ENCODE measurements at regions of chr2 and their contacts with region 1.

Region 1: DNA sequence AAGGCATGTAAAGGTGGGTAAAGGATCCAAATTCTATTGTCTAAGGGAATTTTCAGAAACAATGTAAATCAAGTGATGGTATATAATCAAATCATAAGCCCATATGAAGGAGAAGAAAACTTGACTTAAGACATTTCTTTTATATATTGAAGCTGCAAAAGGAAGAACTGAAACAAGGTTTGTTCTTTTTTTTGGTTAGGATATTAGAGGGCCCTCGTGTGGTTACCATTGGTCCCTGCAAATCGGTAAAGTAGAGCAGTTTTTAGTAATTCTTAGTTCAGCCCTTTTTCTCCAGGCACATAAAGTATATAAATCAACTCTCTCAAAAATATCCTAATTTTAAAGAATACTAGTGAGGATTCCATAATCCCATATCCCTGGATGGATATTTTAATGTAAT is 105.6 kb upstream of the STK17B start:
- DNase-seq: peak; percentile 50
- ATAC-seq: peak; percentile 20
- H3K4me3 Mint-ChIP-seq: no peak overlapping the region
- H3K27ac Mint-ChIP-seq: peak overlapping the region; percentile 11
- H3K4me1 Mint-ChIP-seq: peaks cover 61% of the 10 kb centered on the region
- H3K27me3 Mint-ChIP-seq: no peaks in the 10 kb centered on the region

Region 2: DNA sequence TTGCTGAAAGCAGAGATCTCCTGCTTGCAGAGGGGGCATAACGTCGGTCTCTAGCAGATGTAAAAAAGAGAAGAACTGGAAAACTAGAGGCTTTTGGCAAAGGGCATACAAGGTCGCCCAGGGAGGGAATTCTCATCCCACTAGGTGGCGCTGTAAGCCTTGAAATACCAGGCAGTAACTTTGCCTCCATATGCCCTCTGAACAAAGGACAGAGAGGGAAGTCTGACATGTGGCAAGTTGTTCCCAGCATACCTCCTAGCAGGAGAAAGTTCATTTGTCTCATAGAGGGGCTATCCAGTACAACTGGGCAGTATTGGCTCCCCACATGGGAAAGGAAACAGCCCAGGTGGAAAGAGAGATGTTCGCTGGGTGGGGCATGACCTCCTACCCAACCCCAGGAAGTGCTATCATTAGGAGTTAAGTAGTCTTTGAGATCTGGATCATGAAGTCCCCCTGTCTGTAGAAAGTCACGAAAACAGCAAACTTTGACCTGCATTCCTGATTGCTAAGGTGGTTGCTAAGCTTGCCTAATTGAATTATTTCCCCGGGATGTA is 145.5 kb before region 1 on chr2:
- CTCF ChIA-PET with region 1: interaction called, 10 read pairs
- POLR2A ChIA-PET with region 1: no interaction called
- intact Hi-C with region 1: loop called in 1 of 2 experiments (anchors 1 kb)
- DNase-seq: peak; percentile 83
- ATAC-seq: peak; percentile 62
- H3K4me3 Mint-ChIP-seq: no peak overlapping the region
- H3K27ac Mint-ChIP-seq: peak overlapping the region; percentile 65
- H3K4me1 Mint-ChIP-seq: peaks cover 5% of the 10 kb centered on the region
- H3K27me3 Mint-ChIP-seq: no peaks in the 10 kb centered on the region

Region 3: DNA sequence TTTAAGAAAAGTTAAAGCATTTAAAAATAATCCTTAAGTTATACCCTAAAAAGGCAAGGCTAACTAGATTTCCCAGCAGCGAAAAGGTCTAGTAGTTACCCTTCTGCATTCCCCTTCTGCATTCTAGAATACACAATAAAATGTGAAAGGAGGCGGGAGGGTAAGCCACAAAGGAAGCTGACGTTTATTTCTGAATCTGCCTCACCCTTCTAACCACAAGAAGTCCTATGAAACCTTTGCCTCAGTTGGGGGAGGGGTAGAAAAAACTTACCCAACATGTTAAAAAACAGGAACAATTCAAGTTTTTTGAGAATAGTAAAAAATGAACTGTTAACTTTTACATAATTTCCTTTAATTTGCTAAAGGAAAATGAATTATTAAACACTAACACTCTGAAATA is 116.9 kb before region 1 on chr2:
- CTCF ChIA-PET with region 1: interaction called, 12 read pairs
- POLR2A ChIA-PET with region 1: interaction called, 4 read pairs
- intact Hi-C with region 1: no loop called
- DNase-seq: peak; percentile 73
- ATAC-seq: peak; percentile 45
- H3K4me3 Mint-ChIP-seq: peak overlapping the region; percentile 56
- H3K27ac Mint-ChIP-seq: peak overlapping the region; percentile 90
- H3K4me1 Mint-ChIP-seq: peaks cover 76% of the 10 kb centered on the region
- H3K27me3 Mint-ChIP-seq: no peaks in the 10 kb centered on the region

Region 4: DNA sequence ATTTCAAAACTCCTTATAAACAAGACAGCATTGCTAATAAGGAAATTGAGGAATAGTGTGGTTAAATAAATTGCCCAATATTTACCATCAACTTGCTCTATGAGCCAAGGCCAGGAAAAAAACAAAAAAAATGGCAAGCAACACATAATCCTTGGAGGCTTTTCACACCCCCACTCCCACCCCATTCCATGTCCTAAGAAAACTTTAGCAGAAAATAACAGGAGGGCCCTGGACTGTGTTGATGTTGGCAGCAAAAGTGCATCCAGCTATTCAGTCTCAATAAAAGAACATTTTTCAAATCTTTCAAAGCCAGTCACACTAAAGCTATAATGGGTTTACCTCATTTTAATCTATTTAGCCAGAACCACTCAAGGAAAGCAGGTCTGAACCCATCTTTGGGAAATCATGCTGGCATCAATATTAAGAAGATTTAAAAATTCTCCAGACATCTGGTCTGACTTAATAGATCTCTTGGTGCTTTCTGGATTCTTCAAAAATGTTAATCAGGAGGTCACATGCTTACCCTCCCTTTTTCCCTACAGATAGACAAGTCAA is 71.0 kb before region 1 on chr2:
- CTCF ChIA-PET with region 1: interaction called, 8 read pairs
- POLR2A ChIA-PET with region 1: no interaction called
- intact Hi-C with region 1: loop called (anchors 1 to 2 kb)
- DNase-seq: no peak
- ATAC-seq: no peak
- H3K4me3 Mint-ChIP-seq: no peak overlapping the region
- H3K27ac Mint-ChIP-seq: peak overlapping the region; percentile 35
- H3K4me1 Mint-ChIP-seq: peaks cover 45% of the 10 kb centered on the region
- H3K27me3 Mint-ChIP-seq: no peaks in the 10 kb centered on the region

Region 5: GRCh38 chr2:196263181-196263747 is 13.7 kb before region 1 on chr2:
- CTCF ChIA-PET with region 1: interaction called, 36 read pairs
- POLR2A ChIA-PET with region 1: interaction called, 3 read pairs
- intact Hi-C with region 1: loop called in 1 of 2 experiments (anchors 2 kb)
- DNase-seq: peak; percentile 51
- ATAC-seq: peak; percentile 62
- H3K4me3 Mint-ChIP-seq: peak overlapping the region; percentile 70
- H3K27ac Mint-ChIP-seq: peak overlapping the region; percentile 95
- H3K4me1 Mint-ChIP-seq: peaks cover 86% of the 10 kb centered on the region
- H3K27me3 Mint-ChIP-seq: no peaks in the 10 kb centered on the region

Region 6: GRCh38 chr2:196376984-196377877 is 100.2 kb after region 1 on chr2:
- CTCF ChIA-PET with region 1: no interaction called
- POLR2A ChIA-PET with region 1: no interaction called
- intact Hi-C with region 1: no loop called
- DNase-seq: peak; percentile 66
- ATAC-seq: peak; percentile 84
- H3K4me3 Mint-ChIP-seq: no peak overlapping the region
- H3K27ac Mint-ChIP-seq: peak overlapping the region; percentile 17
- H3K4me1 Mint-ChIP-seq: peaks cover 13% of the 10 kb centered on the region
- H3K27me3 Mint-ChIP-seq: peaks cover 4% of the 10 kb centered on the region

Region 7: DNA sequence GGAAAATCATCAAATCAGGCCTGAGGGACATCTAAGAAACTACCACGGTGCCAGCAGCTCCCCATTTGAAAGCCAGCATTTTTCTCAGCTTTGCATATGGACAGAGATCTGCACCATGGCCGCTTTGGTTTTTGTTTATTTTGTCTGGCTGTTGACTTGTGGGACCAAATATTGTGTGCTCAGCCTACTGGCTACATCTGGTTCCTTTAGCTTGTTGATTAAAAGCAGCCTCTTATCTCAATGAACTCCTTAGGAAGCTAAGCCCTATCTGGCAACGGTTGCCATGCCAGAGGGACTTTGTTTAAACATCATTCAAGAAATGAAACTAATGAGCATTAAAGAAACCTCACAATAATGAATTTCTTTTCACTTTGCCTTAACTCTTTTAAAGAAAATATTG is 330.1 kb after region 1 on chr2:
- CTCF ChIA-PET with region 1: no interaction called
- POLR2A ChIA-PET with region 1: no interaction called
- intact Hi-C with region 1: no loop called
- DNase-seq: no peak
- ATAC-seq: no peak
- H3K4me3 Mint-ChIP-seq: no peak overlapping the region
- H3K27ac Mint-ChIP-seq: no peak overlapping the region
- H3K4me1 Mint-ChIP-seq: no peaks in the 10 kb centered on the region
- H3K27me3 Mint-ChIP-seq: peaks cover 5% of the 10 kb centered on the region